ENCODE measurements at regions of chr1 and their contacts with region 1.

Region 1: GRCh38 chr1:192808518-192809306 is at the start of gene RGS2:
- DNase-seq: peak; percentile 84
- H3K4me3 Mint-ChIP-seq: peak within 1 kb of the TSS; percentile 93
- H3K27ac Mint-ChIP-seq: peak within 1 kb of the TSS; percentile 91
- H3K4me1 Mint-ChIP-seq: peaks cover 43% of the 10 kb centered on the region
- H3K27me3 Mint-ChIP-seq: peaks cover under 1% of the 10 kb centered on the region
- total RNA-seq, gene RGS2: 11.3 and 12.1 TPM in 2 replicates

Region 2: DNA sequence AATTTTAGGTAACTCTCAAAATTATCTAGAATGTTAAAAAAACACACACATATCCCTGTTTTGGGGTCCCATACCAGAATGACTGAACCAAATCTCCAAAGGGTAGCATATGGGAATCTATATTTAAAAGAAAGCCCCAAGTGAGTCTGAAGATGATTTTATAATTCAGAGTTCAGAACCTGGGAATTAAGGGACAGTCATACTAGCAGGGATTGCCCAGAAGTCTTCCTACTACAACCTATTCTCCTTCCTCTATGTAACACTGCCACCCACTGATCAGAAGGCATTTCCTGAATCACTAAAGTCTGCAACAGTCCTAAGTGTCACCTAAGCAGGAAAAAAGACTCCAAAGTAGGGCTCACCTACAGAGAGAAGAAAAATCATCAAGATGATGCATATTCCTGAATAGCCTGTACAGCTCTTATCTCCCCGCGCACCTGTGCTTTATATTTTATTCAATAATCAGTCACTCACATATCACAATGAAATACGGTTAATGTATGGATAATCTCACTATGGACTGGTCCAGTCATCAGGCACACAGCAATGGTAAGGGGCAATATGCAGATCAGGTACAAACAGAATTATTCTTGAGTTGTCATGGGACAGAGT is 228.3 kb before region 1 on chr1:
- intact Hi-C with region 1: loop called (anchors 1 kb)
- DNase-seq: no peak
- H3K4me3 Mint-ChIP-seq: peak overlapping the region; percentile 60
- H3K27ac Mint-ChIP-seq: no peak overlapping the region
- H3K4me1 Mint-ChIP-seq: peaks cover 71% of the 10 kb centered on the region
- H3K27me3 Mint-ChIP-seq: peaks cover 8% of the 10 kb centered on the region

Region 3: DNA sequence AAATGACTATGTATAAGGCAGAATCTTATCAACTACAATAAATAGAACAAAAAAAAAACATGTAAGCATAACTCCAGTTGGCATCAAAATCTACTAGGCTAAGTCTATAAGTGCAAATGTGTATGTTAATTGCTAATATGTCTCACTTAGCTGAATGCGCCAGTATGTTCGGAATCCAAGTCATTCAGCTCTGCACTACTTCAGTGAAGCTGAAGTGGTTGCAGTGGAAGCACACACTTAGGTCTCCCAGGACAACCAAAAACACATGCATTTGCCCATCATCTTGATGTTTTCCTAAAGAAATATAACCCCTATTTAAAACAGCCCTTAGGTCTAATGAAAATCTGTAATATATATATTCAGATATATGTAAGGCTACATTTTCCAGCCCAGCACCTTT is 40.9 kb before region 1 on chr1:
- intact Hi-C with region 1: no loop called
- DNase-seq: no peak
- H3K4me3 Mint-ChIP-seq: no peak overlapping the region
- H3K27ac Mint-ChIP-seq: no peak overlapping the region
- H3K4me1 Mint-ChIP-seq: no peaks in the 10 kb centered on the region
- H3K27me3 Mint-ChIP-seq: peaks cover 3% of the 10 kb centered on the region

Region 4: DNA sequence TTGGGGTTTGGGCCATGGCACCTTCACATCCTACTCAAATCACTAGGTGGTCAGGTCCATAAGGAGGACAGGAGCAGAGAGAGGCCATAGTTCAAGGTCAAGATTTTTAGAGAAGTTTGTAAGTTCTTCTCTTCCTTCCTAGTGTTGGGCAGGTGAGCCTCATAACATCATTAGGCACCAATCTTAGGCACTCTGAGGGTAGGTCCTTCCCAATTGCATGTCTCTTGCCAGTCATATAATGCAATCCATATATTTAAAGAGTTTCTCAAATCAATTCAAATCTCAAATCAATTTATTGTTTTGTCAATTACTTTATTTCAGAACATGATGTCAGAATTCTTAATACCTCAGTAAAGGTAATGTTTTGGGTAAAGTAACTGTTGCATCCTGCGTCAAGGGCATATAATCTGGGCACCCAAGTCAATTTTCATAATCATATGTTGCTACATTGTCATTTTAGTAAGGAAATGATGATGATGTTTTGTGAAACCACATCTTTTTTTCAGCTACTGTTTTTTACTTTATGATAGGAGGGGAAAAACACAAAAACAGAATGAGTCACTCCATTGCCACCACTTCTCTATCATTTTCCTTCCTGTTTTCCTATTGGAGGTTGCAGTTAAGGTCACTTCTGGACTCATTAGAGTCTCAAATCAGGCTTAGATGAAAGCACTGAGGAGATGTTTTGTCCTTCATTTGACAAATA is 127.8 kb after region 1 on chr1:
- intact Hi-C with region 1: loop called (anchors 1 kb)
- DNase-seq: no peak
- H3K4me3 Mint-ChIP-seq: peak overlapping the region; percentile 9
- H3K27ac Mint-ChIP-seq: peak overlapping the region; percentile 85
- H3K4me1 Mint-ChIP-seq: peaks cover 41% of the 10 kb centered on the region
- H3K27me3 Mint-ChIP-seq: no peaks in the 10 kb centered on the region

Region 5: DNA sequence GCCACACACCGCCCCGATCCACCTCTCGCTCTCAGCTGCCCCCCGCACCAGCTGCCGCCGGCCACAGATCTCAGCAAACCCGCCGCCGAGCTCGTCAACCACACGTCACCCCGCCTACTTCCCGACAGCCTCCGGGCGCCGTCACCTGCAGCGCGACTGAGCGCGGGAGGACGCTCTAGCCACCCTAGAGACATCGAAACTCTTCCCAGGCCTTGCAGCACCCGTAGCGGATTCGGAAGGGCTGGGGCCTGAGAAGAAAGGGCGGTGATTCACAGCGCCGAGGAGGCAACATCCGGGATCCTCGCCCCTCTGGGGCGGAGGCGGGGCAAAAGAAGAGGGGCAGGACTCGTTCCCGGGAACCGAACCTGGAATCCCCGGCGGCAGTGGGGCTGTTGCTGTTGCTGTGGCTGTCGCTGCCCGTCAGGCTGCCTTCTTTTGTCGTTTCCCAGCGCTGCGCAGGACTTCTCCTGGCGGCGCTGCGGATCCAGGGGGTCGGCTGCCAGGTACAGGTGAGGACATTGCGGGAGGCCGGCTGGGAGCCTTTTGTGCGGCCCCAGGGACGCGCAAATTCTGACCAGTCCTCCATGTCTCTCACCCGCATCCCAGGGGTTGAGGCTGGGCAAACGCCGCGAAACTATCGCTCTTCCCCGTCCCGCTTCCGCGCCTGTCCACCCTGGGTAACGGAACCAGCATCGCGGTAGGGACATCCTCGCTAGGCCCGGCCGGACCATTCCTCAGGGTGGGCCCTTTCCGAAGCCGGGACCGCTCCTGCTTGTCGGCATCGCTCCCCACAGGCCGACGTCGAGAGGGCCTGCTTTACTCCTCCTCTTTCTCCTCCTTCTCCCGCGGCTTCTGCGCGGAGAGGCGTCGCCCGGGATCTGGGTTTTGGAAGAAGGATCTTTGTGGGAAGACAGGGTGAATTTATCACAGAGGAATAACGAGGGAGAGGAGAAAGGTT is 250.8 kb after region 1 on chr1 and contains the starts of genes RO60 and UCHL5:
- intact Hi-C with region 1: loop called (anchors 1 kb)
- DNase-seq: peak; percentile 95
- H3K4me3 Mint-ChIP-seq: peak within 1 kb of the TSS; percentile 94
- H3K27ac Mint-ChIP-seq: peak within 1 kb of the TSS; percentile 100
- H3K4me1 Mint-ChIP-seq: peaks cover 59% of the 10 kb centered on the region
- H3K27me3 Mint-ChIP-seq: no peaks in the 10 kb centered on the region
- total RNA-seq, gene RO60: 68.7 and 70.0 TPM in 2 replicates
- total RNA-seq, gene UCHL5: 88.1 and 93.1 TPM in 2 replicates

Region 6: DNA sequence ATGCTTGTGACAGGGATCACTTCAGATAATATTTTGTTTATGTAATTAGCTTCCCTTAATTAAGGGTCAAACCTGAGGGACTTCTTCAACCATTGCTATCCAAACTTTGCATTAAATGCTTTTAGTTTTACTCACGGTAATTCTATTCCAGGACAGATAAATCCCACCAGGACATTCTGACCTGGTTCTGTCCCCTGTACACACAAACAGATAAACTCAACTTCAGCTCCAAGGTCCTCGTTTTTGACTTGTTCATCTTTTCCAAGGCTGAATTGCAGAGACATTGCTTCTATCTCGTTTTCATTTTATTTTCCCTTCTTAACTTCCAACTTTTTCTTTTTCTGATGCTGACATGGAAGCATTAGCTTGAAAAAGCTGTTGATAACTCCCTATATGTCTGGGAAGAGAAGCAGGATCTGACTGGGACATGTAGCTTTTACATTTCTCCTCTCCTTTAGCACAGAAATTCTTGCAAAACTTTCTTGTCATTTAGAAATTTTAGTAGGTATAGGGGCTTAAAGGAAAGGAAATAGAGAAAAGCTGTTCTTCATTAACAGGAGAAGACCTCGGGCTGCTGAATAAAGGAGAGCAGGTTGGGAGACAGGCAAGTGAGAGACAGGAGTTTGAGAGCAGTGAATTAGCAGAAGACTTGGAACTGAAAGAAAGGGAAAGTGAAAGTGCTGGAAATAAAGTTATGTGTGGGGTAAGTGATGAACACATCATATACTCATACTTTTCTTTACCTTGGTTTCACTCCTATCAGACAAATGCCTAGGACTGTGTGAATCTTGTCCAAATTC is 609.4 kb after region 1 on chr1:
- intact Hi-C with region 1: loop called (anchors 5 kb)
- DNase-seq: no peak
- H3K4me3 Mint-ChIP-seq: peak overlapping the region; percentile 36
- H3K27ac Mint-ChIP-seq: peak overlapping the region; percentile 40
- H3K4me1 Mint-ChIP-seq: peaks cover 56% of the 10 kb centered on the region
- H3K27me3 Mint-ChIP-seq: peaks cover 5% of the 10 kb centered on the region

Region 7: DNA sequence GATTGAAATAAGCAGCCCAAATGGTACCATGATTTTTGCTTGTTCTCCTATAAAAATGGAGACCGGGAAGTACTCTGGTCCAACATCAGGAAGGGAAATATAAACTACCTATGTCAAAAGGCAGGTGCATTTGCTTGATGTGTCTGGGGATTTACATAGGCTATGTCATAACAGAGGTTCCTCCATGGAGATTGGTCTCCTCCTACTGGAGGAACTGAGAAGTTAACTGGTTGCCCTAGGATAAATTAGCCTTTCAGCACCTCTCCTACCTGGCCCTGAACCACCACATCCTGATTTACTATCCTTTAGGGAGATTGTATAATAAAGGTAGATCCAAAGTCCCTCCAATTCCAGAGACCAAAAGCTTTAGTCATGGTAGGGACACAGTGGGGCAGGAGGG is 1487.0 kb after region 1 on chr1:
- intact Hi-C with region 1: loop called (anchors 5 kb)
- DNase-seq: peak; percentile 12
- H3K4me3 Mint-ChIP-seq: no peak overlapping the region
- H3K27ac Mint-ChIP-seq: no peak overlapping the region
- H3K4me1 Mint-ChIP-seq: peaks cover 18% of the 10 kb centered on the region
- H3K27me3 Mint-ChIP-seq: no peaks in the 10 kb centered on the region

Measured in activated T-helper 1 cell treated with anti-CD3 and anti-CD28 coated beads, Interleukin-12 subunit alpha, Interleukin-12 subunit beta, Interleukin-2, Interleukin-4 antibody, amounts not matched to agents 30 ng/mL and 10 ng/mL and 1 ng/mL, durations not matched to agents 14 hours and 24 hours and 36 hours (primary cell).